HepG2 (cell line): ENCODE measurements at regions of chr11 and their contacts with region 1.

Region 1: DNA sequence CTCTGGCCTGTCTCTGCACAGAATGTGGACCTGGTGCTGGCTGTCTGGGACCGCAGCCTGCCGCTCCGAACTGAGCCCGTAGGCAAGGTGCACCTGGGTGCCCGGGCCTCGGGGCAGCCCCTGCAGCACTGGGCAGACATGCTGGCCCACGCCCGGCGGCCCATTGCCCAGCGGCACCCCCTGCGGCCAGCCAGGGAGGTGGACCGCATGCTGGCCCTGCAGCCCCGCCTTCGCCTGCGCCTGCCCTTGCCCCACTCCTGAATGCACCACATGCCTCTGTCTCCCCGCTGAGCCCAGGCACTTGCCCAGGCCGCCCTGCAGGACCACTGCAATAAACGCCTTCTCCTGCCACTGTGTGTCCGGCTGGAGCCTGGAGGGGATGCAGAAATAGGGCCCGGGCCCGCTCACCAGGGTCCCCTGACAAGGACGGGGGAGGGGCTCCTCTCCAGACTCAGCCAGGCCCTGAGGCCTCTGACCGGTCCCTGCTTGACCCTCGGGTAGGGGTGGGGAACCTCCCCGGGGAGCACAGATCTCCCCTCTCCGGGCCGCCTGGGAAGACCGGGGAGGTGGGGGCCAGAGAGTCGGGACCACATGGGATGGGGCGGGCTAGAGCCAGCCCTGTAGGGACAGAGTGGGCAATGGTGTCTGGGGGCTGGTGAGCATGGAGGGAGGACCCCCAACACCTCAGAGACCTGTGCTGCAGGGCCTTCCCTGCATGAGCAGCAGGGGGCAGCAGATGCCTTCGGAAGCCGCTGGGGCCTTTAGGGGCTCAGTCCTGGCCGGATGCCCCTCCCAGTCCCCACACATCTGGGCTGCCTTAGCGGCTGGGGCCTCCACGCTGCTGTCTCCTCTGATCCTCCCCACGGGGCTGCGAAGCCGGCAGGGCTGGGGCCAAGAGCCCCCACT is 1.4 kb upstream of the TNNI2 start:
- DNase-seq: peak; percentile 45
- ATAC-seq: peak; percentile 64
- H3K4me3 ChIP-seq: no peak overlapping the region
- H3K27ac ChIP-seq: no peak overlapping the region
- H3K4me1 ChIP-seq: peaks cover 60% of the 10 kb centered on the region
- H3K27me3 ChIP-seq: peaks cover 9 to 20% of the 10 kb centered on the region in 2 experiments; a peak in 4 of 5 replicates
- CTCF ChIP-seq: peak; percentile 97
- EP300 ChIP-seq: no peak
- POLR2A ChIP-seq: no peak
- RAD21 ChIP-seq: peak; percentile 92

Region 2: DNA sequence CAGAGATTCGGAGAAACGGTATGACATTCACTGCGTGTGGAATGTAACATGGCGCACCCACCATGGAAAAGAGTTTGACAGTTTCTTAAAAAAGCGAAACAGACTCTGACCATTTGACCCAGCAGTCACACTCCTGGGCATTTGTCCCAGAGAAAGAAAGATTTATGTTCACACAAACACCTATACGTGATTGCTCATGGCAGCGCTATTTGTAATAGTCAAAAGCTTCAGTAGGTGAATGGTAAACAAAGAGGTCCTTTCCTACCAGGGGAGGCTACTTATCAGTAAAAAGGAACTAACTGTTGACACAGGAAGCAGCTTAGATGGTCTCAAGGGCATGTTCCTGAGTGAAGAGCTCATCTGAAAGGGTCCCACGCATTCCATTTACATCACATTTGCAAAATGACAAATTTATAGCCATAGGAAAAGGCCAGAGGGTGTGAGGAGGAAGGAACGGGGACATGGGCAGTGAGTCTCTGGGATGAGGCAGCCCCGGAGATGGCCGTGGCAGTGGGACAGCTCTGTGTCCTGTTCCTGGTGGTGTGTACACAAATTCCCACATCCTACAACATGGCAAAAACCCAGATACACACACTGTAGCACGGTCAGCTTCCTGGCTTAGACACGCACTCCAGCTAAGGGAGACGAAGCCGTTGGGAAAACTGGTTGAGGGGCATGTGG is 155.1 kb before region 1 on chr11:
- CTCF ChIA-PET with region 1: no interaction called
- POLR2A ChIA-PET with region 1: no interaction called
- in situ Hi-C with region 1: no loop called
- intact Hi-C with region 1: no loop called
- DNase-seq: peak; percentile 59
- ATAC-seq: peak; percentile 30
- H3K4me3 ChIP-seq: no peak overlapping the region
- H3K27ac ChIP-seq: peak overlapping the region; percentile 66
- H3K4me1 ChIP-seq: peaks cover 55% of the 10 kb centered on the region
- H3K27me3 ChIP-seq: no peaks in the 10 kb centered on the region
- CTCF ChIP-seq: no peak
- EP300 ChIP-seq: peak in 1 of 2 experiments; percentile 98; a peak in 2 of 4 replicates
- POLR2A ChIP-seq: peak in 1 of 2 experiments; percentile 58; a peak in 2 of 4 replicates
- RAD21 ChIP-seq: no peak

Region 3: DNA sequence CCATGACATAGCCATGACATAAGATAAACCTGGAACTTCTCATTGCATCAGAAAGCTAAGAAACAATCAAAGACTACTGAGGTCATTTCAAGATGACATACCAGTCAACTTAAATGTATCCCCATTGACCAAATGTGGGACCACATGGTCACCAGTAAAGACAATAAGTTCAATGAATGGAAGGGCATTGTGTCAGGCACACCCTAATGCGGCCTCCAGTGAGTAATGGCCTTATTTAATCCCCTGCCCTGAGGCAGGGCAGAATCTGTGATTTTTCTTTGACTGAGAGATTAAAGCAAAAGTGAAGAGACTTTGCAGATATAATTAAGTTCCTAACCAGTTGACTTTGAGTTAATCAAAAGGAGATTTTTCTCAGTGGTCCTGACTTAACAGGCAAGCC is 19.9 kb before region 1 on chr11:
- CTCF ChIA-PET with region 1: no interaction called
- POLR2A ChIA-PET with region 1: no interaction called
- in situ Hi-C with region 1: no loop called
- intact Hi-C with region 1: no loop called
- DNase-seq: no peak
- ATAC-seq: no peak
- H3K4me3 ChIP-seq: no peak overlapping the region
- H3K27ac ChIP-seq: no peak overlapping the region
- H3K4me1 ChIP-seq: no peaks in the 10 kb centered on the region
- H3K27me3 ChIP-seq: peaks cover 3 to 47% of the 10 kb centered on the region in 2 experiments; a peak in 3 of 5 replicates
- CTCF ChIP-seq: no peak
- EP300 ChIP-seq: no peak
- POLR2A ChIP-seq: no peak
- RAD21 ChIP-seq: no peak

Region 4: GRCh38 chr11:1876361-1877063 is 39.1 kb after region 1 on chr11:
- CTCF ChIA-PET with region 1: no interaction called
- POLR2A ChIA-PET with region 1: no interaction called
- in situ Hi-C with region 1: no loop called
- intact Hi-C with region 1: loop called (anchors 2 kb)
- DNase-seq: peak; percentile 27
- ATAC-seq: peak; percentile 66
- H3K4me3 ChIP-seq: no peak overlapping the region
- H3K27ac ChIP-seq: no peak overlapping the region
- H3K4me1 ChIP-seq: peaks cover 28% of the 10 kb centered on the region
- H3K27me3 ChIP-seq: peaks cover 11 to 53% of the 10 kb centered on the region in 2 experiments; a peak in 4 of 5 replicates
- CTCF ChIP-seq: peak; percentile 83
- EP300 ChIP-seq: no peak
- POLR2A ChIP-seq: no peak
- RAD21 ChIP-seq: peak; percentile 45

Region 5: GRCh38 chr11:2041153-2041552 is 203.7 kb after region 1 on chr11:
- CTCF ChIA-PET with region 1: no interaction called
- POLR2A ChIA-PET with region 1: no interaction called
- in situ Hi-C with region 1: no loop called
- intact Hi-C with region 1: no loop called
- DNase-seq: no peak
- ATAC-seq: no peak
- H3K4me3 ChIP-seq: no peak overlapping the region
- H3K27ac ChIP-seq: no peak overlapping the region
- H3K4me1 ChIP-seq: no peaks in the 10 kb centered on the region
- H3K27me3 ChIP-seq: no peaks in the 10 kb centered on the region
- CTCF ChIP-seq: no peak
- EP300 ChIP-seq: no peak
- POLR2A ChIP-seq: no peak
- RAD21 ChIP-seq: no peak